ENCODE measurements at regions of chr15 and their contacts with region 1.

Region 1: DNA sequence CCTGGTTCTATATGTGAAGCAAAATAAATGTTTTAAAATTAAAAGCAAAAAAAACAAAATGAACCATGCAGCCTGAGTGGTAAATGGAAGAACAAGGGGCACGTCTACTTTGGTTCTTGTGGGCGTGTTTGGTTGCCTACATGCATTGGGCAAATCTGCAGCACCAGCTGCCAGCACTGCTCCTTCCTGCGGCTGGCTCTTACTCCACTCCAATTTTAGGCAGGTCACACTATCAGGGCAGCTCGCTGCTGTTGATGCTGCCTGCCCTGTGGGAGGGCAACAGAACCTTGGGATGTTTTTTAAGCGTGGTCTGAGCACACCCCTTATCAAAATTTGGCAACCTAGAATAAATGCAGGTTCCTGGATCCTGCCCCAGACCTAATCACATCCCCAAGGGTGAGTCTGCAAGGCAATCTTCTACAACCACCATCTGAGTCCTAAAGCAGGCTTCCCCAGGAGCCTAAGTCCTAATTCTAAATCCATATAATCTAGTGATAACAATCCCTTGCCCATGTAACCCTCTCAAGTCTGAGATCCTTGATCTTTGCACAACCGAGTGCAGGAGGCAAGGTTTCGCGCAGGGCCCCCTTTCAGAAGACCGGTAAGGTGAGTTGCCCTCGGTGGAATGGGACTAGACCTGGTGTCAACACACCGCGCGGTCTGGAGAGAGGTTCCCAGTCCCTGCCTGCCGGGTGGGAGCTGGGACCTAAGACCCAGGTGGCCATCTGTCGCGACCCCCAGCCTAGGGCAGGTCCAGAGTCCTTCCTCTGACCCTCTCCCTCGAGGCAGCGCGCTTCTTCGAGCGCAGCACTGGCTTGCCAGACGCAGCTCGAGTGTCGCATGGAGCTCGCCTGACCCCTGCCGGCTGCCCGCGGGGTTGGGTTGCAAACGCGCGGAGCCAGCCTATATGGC is 15.9 kb downstream of the IVD start:
- DNase-seq: peak; percentile 67 to 73 (median 69)
- H3K4me3 ChIP-seq: peak overlapping the region in 1 of 3 experiments; percentile 54
- H3K4me3 Mint-ChIP-seq: peak overlapping the region; percentile 60 to 74
- H3K27ac ChIP-seq: no peak overlapping the region
- H3K27ac Mint-ChIP-seq: no peak overlapping the region
- H3K4me1 ChIP-seq: peaks cover 14 to 18% of the 10 kb centered on the region in 2 donors
- H3K4me1 Mint-ChIP-seq: peaks cover 19% of the 10 kb centered on the region
- H3K27me3 ChIP-seq: no peaks in the 10 kb centered on the region
- H3K27me3 Mint-ChIP-seq: peaks cover 2 to 3% (median 2%) of the 10 kb centered on the region in 3 donors
- CTCF ChIP-seq: peak; percentile 98

Region 2: DNA sequence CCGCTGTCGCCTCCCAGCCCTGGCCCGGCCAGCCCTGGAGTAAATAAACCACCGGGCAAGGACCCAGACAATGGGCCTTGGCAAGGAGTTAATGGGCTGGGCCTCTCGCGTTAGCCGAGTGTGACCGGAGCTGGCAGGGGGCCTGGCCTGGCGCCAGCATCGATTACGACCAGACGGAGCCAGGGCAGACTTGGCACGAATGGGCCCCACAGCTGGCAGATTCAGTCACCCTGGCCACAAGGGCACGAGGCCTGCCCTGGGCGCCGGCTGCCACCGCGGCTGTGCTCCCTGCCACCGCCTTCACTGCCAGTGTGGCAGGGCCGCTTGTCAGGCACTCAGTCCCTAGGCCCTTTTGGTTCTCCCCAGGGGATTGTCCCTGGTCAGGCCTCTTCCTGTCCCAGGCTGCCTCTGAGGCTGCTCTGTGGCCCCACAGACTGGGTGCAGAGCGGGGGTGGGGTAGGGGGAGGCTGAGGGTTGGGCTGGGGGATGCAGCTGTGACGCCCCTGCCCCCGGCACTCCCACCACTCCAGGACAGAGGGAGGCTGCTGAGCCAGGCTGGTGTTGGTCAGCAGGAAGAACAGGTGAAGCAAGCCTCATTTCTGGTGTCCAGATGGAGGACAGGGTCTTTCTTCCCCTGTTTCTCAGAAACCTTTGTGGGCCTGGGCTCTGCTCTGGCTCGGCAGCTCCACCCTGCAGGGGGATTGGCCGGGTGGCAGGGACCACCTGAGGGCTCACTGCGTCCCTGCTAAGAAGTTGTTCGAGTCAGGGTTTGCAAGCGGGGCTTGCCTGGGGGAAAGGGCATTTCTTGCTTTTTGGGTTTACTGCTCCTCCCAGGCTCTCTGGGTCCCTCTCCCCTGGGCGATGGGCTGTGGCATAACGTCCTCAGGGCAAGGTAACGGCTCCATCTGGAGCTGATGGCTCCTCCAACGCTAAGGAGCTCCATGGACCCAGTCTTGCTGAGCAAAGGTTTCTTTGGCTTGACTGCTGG is 352.0 kb before region 1 on chr15:
- intact Hi-C with region 1: no loop called
- DNase-seq: no peak
- H3K4me3 ChIP-seq: no peak overlapping the region
- H3K4me3 Mint-ChIP-seq: no peak overlapping the region
- H3K27ac ChIP-seq: no peak overlapping the region
- H3K27ac Mint-ChIP-seq: no peak overlapping the region
- H3K4me1 ChIP-seq: peaks cover 4 to 7% of the 10 kb centered on the region in 2 donors
- H3K4me1 Mint-ChIP-seq: peaks cover 22% of the 10 kb centered on the region
- H3K27me3 ChIP-seq: no peaks in the 10 kb centered on the region
- H3K27me3 Mint-ChIP-seq: peaks cover 5 to 12% (median 8%) of the 10 kb centered on the region in 3 donors
- CTCF ChIP-seq: no peak

Region 3: GRCh38 chr15:40217159-40217824 is 204.2 kb before region 1 on chr15:
- intact Hi-C with region 1: loop called in 1 of 2 experiments (anchors 10 kb)
- DNase-seq: peak; percentile 69 to 79 (median 75)
- H3K4me3 ChIP-seq: no peak overlapping the region
- H3K4me3 Mint-ChIP-seq: no peak overlapping the region
- H3K27ac ChIP-seq: no peak overlapping the region
- H3K27ac Mint-ChIP-seq: no peak overlapping the region
- H3K4me1 ChIP-seq: no peaks in the 10 kb centered on the region
- H3K4me1 Mint-ChIP-seq: no peaks in the 10 kb centered on the region
- H3K27me3 ChIP-seq: no peaks in the 10 kb centered on the region
- H3K27me3 Mint-ChIP-seq: no peaks in the 10 kb centered on the region
- CTCF ChIP-seq: peak; percentile 87

Region 4: GRCh38 chr15:40344631-40345120 is 76.8 kb before region 1 on chr15:
- intact Hi-C with region 1: loop called (anchors 2 to 5 kb)
- DNase-seq: peak; percentile 64 to 71 (median 69)
- H3K4me3 ChIP-seq: no peak overlapping the region
- H3K4me3 Mint-ChIP-seq: no peak overlapping the region
- H3K27ac ChIP-seq: no peak overlapping the region
- H3K27ac Mint-ChIP-seq: no peak overlapping the region
- H3K4me1 ChIP-seq: peaks cover 31 to 43% of the 10 kb centered on the region in 2 donors
- H3K4me1 Mint-ChIP-seq: peaks cover 33% of the 10 kb centered on the region
- H3K27me3 ChIP-seq: no peaks in the 10 kb centered on the region
- H3K27me3 Mint-ChIP-seq: peaks cover 0 to 9% (median 7%) of the 10 kb centered on the region in 3 donors
- CTCF ChIP-seq: peak; percentile 85

Region 5: DNA sequence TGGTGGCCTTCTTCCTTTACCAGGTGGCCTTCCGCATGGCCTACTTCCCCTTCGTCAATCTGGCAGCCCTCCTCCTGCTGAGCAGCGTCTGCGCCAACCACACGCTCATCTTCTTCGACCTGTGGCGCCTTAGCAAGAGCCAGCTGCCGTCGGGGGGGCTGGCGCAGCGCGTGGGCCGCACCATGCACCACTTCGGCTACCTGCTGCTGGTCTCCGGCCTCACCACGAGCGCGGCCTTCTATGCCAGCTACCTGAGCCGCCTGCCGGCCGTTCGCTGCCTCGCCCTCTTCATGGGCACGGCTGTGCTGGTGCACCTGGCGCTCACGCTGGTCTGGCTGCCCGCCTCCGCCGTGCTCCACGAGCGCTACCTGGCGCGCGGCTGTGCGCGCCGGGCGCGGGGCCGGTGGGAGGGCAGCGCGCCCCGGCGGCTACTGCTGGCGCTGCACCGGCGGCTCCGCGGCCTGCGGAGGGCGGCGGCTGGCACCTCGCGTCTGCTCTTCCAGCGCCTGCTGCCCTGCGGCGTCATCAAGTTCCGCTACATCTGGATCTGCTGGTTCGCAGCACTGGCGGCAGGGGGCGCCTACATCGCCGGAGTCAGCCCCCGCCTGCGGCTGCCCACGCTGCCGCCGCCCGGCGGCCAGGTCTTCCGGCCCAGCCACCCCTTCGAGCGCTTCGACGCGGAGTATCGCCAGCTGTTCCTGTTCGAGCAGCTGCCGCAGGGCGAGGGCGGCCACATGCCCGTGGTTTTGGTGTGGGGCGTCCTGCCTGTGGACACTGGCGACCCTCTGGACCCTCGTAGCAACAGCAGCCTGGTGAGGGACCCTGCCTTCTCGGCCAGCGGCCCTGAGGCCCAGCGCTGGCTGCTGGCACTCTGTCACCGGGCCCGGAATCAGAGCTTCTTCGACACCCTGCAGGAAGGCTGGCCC is 53.6 kb before region 1 on chr15:
- intact Hi-C with region 1: loop called (anchors 1 to 5 kb)
- DNase-seq: peak; percentile 91 to 93 (median 91)
- H3K4me3 ChIP-seq: peak overlapping the region; percentile 41 to 78 (median 62)
- H3K4me3 Mint-ChIP-seq: peak overlapping the region; percentile 76 to 91
- H3K27ac ChIP-seq: no peak overlapping the region
- H3K27ac Mint-ChIP-seq: peak overlapping the region in 5 of 7 donors; percentile 4 to 83 (median 58)
- H3K4me1 ChIP-seq: peaks cover 21 to 30% of the 10 kb centered on the region in 2 donors
- H3K4me1 Mint-ChIP-seq: peaks cover 28% of the 10 kb centered on the region
- H3K27me3 ChIP-seq: no peaks in the 10 kb centered on the region
- H3K27me3 Mint-ChIP-seq: peaks cover 2 to 12% (median 6%) of the 10 kb centered on the region in 3 donors
- CTCF ChIP-seq: peak; percentile 99

Region 6: GRCh38 chr15:40466426-40467244 is 45.1 kb after region 1 on chr15:
- intact Hi-C with region 1: no loop called
- DNase-seq: no peak
- H3K4me3 ChIP-seq: no peak overlapping the region
- H3K4me3 Mint-ChIP-seq: no peak overlapping the region
- H3K27ac ChIP-seq: peak overlapping the region in 1 of 2 donors; percentile 11
- H3K27ac Mint-ChIP-seq: peak overlapping the region in 5 of 7 donors; percentile 46 to 83 (median 70)
- H3K4me1 ChIP-seq: peaks cover 6 to 25% of the 10 kb centered on the region in 2 donors
- H3K4me1 Mint-ChIP-seq: peaks cover 14% of the 10 kb centered on the region
- H3K27me3 ChIP-seq: no peaks in the 10 kb centered on the region
- H3K27me3 Mint-ChIP-seq: peaks cover 0 to 3% (median 2%) of the 10 kb centered on the region in 3 donors
- CTCF ChIP-seq: no peak